Dendritic cell treated with granulocyte-macrophage colony-stimulating factor and Interleukin-4, amounts not matched to agents 40 ng/mL and 50 ng/mL, for 4 days (primary cell): ENCODE measurements at regions of chr15 and their contacts with region 1.

Region 1: DNA sequence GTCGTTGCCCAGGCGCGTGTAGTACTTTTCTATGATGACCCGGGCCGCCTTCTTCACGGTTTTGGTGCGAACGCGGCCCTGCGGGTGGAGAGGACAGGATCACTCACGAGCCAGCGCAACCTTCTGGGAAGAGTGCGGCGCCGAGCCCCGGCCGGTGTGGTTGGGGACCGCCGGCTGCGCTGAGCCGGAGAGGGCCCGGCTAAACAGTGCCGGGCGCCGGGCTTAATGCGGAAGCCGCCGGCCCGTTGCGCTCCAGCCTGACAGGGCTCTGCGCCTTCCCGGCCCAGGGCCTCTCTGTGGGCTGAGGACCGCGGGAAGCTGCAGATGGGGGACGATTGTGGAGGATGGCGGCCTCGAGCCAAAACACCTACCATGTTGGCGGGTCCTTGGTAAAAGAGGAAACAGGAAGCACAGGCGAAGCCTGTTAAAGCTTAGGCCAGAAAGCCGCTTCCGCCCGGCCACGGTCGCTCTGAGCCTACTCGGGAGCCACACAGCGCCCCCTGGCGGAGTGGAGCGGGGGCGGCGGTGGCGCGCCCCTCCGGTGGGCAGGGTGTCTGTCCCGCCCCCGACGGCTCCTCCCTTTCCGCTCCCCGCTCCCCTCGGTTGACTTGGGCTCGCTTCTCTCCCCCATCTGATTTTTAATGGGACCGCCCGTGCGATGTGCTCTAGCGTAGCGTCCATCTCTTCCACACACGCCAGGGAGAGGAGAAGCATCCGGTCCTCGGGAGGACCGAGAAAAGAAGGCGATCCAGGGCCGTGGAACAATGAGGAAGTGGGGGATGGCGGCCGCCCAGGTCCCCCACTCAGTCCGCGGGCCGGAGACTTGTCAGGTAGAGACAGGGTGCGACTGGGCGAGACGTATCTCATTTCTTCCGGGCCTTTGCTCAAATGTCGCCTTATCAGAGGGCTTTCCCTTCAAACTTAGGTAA is at the start of gene RPS17:
- H3K4me3 Mint-ChIP-seq: peak within 1 kb of the TSS; percentile 96
- H3K27ac Mint-ChIP-seq: peak within 1 kb of the TSS; percentile 96
- H3K4me1 Mint-ChIP-seq: peaks cover 43% of the 10 kb centered on the region
- H3K27me3 Mint-ChIP-seq: peaks cover 8% of the 10 kb centered on the region

Region 2: DNA sequence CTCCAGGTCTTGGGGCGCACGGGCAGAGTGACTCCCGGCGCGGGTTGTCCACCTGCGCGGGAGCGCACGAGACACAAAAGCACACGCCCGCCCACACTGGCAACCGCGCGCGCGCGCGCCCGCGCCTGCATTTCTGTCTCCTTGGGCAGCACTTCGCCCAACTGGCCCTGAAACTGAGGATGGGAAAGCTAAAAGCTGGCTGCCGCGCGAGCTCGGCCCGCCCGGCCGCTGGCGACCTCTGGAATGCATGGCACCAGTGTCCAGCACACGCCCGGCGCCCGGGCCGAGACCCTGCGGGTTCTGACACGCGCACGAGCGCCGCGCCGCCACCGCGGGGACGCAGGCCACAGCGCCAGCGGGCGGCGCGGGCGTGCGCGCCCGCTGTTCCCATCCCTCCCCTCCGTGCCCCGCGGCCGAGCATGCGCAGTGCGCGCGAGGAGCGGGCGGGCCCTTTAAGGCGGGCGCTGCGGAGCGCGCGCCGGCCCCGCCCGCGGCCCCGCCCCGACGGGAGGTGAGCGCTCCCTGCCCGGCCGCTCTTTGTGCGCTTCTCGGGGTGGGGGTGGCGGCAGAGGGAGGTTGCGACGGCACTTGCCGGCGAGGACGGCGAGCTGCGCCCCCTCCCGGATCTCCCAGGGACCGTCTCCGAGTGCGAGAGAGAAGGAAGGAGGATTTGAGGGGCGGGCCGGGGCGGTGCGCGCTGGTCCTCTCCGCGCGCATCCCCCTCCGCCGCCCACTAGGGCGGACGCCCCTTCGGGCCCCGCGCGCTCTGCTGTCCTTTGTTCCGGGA is 493.5 kb before region 1 on chr15:
- intact Hi-C with region 1: loop called (anchors 10 kb)
- H3K4me3 Mint-ChIP-seq: peak overlapping the region; percentile 93
- H3K27ac Mint-ChIP-seq: peak overlapping the region; percentile 99
- H3K4me1 Mint-ChIP-seq: peaks cover 28% of the 10 kb centered on the region
- H3K27me3 Mint-ChIP-seq: peaks cover 29% of the 10 kb centered on the region

Region 3: GRCh38 chr15:82699726-82700125 is 159.4 kb after region 1 on chr15:
- intact Hi-C with region 1: no loop called
- H3K4me3 Mint-ChIP-seq: no peak overlapping the region
- H3K27ac Mint-ChIP-seq: no peak overlapping the region
- H3K4me1 Mint-ChIP-seq: no peaks in the 10 kb centered on the region
- H3K27me3 Mint-ChIP-seq: no peaks in the 10 kb centered on the region

Region 4: DNA sequence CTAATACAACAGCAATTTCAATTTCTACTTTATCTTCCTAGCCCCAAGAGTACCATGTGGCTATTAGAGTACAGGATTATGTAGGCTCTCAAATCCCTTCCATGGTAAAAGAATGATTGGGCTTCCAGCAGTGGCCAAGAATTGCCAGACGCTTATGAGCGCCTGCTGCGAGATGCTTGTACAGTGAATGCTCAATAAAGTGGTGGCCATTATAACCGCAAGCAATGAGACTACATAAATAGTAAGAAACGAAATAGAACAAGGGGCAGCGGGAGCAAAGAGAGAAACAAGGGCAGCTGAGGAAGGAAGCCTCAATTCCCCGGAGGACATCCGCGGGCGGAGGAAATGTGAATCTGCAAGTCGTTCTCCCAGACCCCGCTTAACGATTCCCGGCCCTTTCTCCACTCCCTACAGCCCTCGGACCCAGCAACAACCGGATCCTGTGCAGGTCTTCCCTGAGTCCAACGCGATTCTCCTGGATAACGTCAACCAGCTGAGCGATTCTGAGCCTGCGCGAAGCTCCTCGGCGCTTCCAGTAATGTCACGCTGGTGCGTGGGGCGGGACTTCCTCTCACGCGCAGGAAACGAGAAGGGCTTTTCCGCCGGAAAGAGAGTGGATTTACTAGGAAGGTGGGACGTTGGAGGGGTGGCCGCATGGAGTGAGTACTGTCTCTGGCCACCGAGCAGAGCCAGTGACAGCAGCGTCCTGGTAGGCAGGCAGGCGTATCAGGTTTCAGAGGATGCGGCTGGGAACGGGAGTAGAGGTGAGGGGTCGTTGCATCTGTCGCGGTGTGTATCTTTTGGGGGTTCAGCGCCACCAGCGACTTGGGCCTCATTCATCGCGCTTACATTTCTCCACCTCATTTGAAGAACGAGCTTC is 209.9 kb after region 1 on chr15:
- intact Hi-C with region 1: loop called (anchors 10 kb)
- H3K4me3 Mint-ChIP-seq: peak overlapping the region; percentile 99
- H3K27ac Mint-ChIP-seq: peak overlapping the region; percentile 92
- H3K4me1 Mint-ChIP-seq: peaks cover 32% of the 10 kb centered on the region
- H3K27me3 Mint-ChIP-seq: no peaks in the 10 kb centered on the region

Region 5: GRCh38 chr15:82809404-82810060 is 269.2 kb after region 1 on chr15 and contains the start of gene WHAMM:
- intact Hi-C with region 1: loop called (anchors 10 kb)
- H3K4me3 Mint-ChIP-seq: peak within 1 kb of the TSS; percentile 89
- H3K27ac Mint-ChIP-seq: peak within 1 kb of the TSS; percentile 93
- H3K4me1 Mint-ChIP-seq: peaks cover 26% of the 10 kb centered on the region
- H3K27me3 Mint-ChIP-seq: no peaks in the 10 kb centered on the region